ENCODE measurements at regions of chr19 and their contacts with region 1.

Region 1: GRCh38 chr19:19203012-19203856 is at the start of gene NR2C2AP:
- DNase-seq: peak; percentile 94
- ATAC-seq: peak; percentile 89
- H3K4me3 ChIP-seq: peak within 1 kb of the TSS; percentile 79
- H3K27ac ChIP-seq: peak within 1 kb of the TSS; percentile 73
- H3K4me1 ChIP-seq: peaks cover 13% of the 10 kb centered on the region
- H3K27me3 ChIP-seq: no peaks in the 10 kb centered on the region
- CTCF ChIP-seq: no peak
- total RNA-seq, gene NR2C2AP: 39.3 and 47.0 TPM in 2 replicates

Region 2: GRCh38 chr19:18940769-18941407 is 262.3 kb before region 1 on chr19 and contains the start of gene HOMER3:
- CTCF ChIA-PET with region 1: interaction called, 10 read pairs
- POLR2A ChIA-PET with region 1: no interaction called
- intact Hi-C with region 1: no loop called
- DNase-seq: peak; percentile 72
- ATAC-seq: peak; percentile 86
- H3K4me3 ChIP-seq: peak within 1 kb of the TSS; percentile 95
- H3K27ac ChIP-seq: no peak within 1 kb of the TSS
- H3K4me1 ChIP-seq: peaks cover 6% of the 10 kb centered on the region
- H3K27me3 ChIP-seq: no peaks in the 10 kb centered on the region
- CTCF ChIP-seq: no peak
- total RNA-seq, gene HOMER3: 118 and 143 TPM in 2 replicates

Region 3: DNA sequence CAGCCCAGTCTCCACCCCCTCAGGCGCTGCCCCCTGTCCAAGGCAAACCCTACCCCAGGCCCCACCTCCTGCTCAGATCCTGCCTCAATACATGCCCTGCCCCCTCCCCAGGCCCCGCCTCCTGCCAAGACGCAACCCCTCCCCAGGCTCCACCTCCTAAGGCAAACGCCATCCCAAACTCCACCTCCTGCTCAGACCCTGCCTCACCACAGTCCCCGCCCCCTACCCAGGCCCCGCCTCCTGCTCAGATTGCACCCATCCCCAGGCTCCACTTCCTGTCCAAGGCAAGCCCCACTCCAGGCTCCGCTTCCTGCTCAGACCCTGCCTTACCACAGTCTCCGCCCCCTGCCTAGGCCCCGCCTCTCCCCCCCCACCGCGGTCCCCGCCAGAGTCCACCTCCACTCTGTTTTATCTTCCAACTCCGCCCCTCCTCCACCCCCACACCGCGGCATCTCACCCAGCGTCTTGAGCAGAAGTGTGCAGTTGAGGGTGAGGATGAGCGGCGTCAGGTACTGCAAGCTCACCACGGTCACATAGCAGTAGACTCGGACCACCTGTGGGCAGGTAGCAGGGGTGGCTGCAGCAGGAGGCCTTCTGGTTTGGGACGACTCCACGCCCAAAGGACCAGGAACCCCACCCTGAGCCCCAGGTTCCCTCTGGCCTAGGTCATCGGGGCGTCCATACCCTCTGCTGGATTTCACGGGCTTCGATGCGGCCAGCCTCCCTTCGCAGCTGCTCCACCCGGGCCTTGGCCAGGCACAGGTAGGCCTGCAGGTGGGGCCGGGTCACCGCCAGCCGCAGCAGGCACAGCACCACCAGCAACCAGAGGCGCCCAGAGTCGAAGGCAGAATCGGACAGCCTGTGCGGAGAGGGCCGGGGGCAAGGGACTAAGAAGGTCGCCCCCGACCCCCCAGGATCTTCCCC is 82.7 kb before region 1 on chr19:
- CTCF ChIA-PET with region 1: no interaction called
- POLR2A ChIA-PET with region 1: no interaction called
- intact Hi-C with region 1: no loop called
- DNase-seq: no peak
- ATAC-seq: peak; percentile 42; the same call in 1 of the 2 replicates
- H3K4me3 ChIP-seq: no peak overlapping the region
- H3K27ac ChIP-seq: no peak overlapping the region
- H3K4me1 ChIP-seq: no peaks in the 10 kb centered on the region
- H3K27me3 ChIP-seq: no peaks in the 10 kb centered on the region
- CTCF ChIP-seq: no peak

Region 4: GRCh38 chr19:19133985-19134384 is 69.2 kb before region 1 on chr19:
- CTCF ChIA-PET with region 1: no interaction called
- POLR2A ChIA-PET with region 1: no interaction called
- intact Hi-C with region 1: no loop called
- DNase-seq: no peak
- ATAC-seq: no peak
- H3K4me3 ChIP-seq: no peak overlapping the region
- H3K27ac ChIP-seq: no peak overlapping the region
- H3K4me1 ChIP-seq: peaks cover 11% of the 10 kb centered on the region; the same call in 1 of the 2 replicates
- H3K27me3 ChIP-seq: no peaks in the 10 kb centered on the region
- CTCF ChIP-seq: no peak

Region 5: DNA sequence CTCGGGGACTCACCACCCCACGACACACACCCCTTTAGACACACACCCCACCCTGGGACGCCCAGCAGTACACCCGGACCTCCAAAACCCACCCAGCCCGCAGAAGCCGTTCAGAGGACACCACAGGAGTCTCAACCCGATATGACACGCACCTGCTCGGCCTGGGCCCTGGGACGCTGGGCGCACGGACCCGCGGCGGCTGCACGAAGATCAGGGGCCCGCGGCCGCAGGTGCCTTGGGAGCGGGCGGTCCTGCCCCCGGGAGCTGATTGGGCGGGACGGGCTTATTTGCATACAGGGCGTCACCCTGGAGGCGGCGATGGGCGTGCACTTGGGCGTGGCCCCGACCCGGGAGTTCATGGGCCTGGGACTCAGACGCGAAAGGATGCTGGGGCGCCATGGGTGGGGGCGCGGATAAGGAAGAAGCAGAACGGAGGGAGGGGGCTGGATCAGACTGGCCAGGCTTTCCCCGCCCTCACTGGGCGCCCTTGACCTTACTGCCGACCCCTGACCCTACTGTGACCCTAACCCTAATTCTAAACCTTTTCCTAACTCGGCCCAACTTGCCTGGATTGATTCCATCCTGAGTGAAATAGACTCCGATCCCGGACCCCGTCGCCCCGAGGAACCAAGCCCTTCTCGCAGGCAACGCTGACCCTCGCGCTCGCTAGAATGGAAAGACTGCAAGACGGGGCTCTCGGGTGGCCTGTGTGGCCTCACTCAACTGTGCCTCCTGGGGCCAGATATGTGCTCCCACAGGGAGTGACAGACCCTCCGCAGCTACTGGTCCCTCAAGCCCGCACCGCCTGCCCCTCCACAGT is 33.0 kb before region 1 on chr19 and contains the start of gene MEF2B:
- CTCF ChIA-PET with region 1: interaction called, 10 read pairs
- POLR2A ChIA-PET with region 1: no interaction called
- intact Hi-C with region 1: no loop called
- DNase-seq: peak; percentile 55
- ATAC-seq: peak; percentile 85
- H3K4me3 ChIP-seq: no peak within 1 kb of the TSS
- H3K27ac ChIP-seq: no peak within 1 kb of the TSS
- H3K4me1 ChIP-seq: no peaks in the 10 kb centered on the region
- H3K27me3 ChIP-seq: no peaks in the 10 kb centered on the region
- CTCF ChIP-seq: no peak
- total RNA-seq, gene MEF2B: 0.22 and 0.29 TPM in 2 replicates

Region 6: GRCh38 chr19:19192078-19192882 is 11.0 kb before region 1 on chr19 and contains the starts of genes BORCS8 and RFXANK:
- CTCF ChIA-PET with region 1: no interaction called
- POLR2A ChIA-PET with region 1: no interaction called
- intact Hi-C with region 1: loop called (anchors 1 kb)
- DNase-seq: peak; percentile 99
- ATAC-seq: peak; percentile 95
- H3K4me3 ChIP-seq: peak within 1 kb of the TSS; percentile 98
- H3K27ac ChIP-seq: peak within 1 kb of the TSS; percentile 88
- H3K4me1 ChIP-seq: peaks cover 3% of the 10 kb centered on the region; the same call in 1 of the 2 replicates
- H3K27me3 ChIP-seq: no peaks in the 10 kb centered on the region
- CTCF ChIP-seq: no peak
- total RNA-seq, gene BORCS8: 21.9 and 33.1 TPM in 2 replicates
- total RNA-seq, gene RFXANK: 88.5 and 104 TPM in 2 replicates

Region 7: DNA sequence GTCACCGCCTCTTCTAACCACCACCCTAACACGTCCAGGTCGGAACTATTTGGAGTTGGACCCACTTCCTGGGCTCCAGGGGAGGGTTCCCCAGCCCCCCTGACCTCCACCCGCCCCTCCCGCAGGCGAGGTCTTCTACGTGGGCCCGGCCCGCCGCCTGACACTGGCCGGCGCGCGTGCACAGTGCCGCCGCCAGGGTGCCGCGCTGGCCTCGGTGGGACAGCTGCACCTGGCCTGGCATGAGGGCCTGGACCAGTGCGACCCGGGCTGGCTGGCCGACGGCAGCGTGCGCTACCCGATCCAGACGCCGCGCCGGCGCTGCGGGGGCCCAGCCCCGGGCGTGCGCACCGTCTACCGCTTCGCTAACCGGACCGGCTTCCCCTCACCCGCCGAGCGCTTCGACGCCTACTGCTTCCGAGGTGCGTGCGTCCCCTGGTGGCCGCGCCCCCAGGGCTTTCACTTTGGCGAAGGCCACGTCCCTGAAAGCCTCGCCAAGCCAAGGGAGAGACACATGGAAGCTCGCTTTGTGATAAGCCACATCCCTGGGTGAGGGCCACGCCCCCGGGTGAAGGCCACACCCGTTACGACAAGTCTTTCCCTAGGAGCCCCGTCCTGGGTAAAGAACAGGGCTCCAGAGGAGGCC is 21.7 kb after region 1 on chr19:
- CTCF ChIA-PET with region 1: no interaction called
- POLR2A ChIA-PET with region 1: no interaction called
- intact Hi-C with region 1: no loop called
- DNase-seq: peak; percentile 67
- ATAC-seq: peak; percentile 87
- H3K4me3 ChIP-seq: peak overlapping the region; percentile 52; the same call in 1 of the 2 replicates
- H3K27ac ChIP-seq: no peak overlapping the region
- H3K4me1 ChIP-seq: no peaks in the 10 kb centered on the region; the same call in 1 of the 2 replicates
- H3K27me3 ChIP-seq: 0 out of 2 replicates have a peak, but pooled peaks cover 4% of the 10 kb centered on the region
- CTCF ChIP-seq: peak; percentile 70

Region 8: GRCh38 chr19:19637523-19638251 is 434.5 kb after region 1 on chr19:
- CTCF ChIA-PET with region 1: no interaction called
- POLR2A ChIA-PET with region 1: no interaction called
- intact Hi-C with region 1: no loop called
- DNase-seq: no peak
- ATAC-seq: no peak
- H3K4me3 ChIP-seq: no peak overlapping the region
- H3K27ac ChIP-seq: no peak overlapping the region
- H3K4me1 ChIP-seq: no peaks in the 10 kb centered on the region
- H3K27me3 ChIP-seq: no peaks in the 10 kb centered on the region
- CTCF ChIP-seq: no peak